ENCODE measurements at regions of chr5 and their contacts with region 1.

Region 1: DNA sequence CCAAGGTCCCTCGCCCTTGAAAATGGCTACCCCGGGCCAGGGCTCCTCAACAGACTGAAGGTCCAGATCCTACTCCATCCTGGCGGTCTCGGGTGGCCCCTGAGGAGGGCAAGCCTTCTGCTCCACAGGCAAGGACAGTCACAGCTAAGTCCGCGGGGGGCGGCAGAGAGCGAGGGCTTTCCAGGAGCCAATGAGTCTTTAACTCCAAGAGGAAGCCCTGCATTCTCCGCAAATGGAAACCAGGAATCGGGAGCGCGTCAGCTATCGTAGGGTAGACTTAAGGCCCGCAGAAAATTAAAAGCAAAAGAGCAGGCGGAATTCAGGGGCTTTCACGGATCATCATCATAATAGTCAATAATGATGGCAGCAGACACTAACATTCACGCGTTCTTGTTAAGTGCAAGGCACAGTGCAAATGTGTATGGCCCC is 87.8 kb upstream of the TNFAIP8 start:
- DNase-seq: peak; percentile 92 to 93
- ATAC-seq: peak; percentile 95
- H3K4me3 ChIP-seq: peak overlapping the region; percentile 83
- H3K27ac ChIP-seq: peak overlapping the region; percentile 80
- H3K4me1 ChIP-seq: peaks cover 3% of the 10 kb centered on the region
- H3K27me3 ChIP-seq: no peaks in the 10 kb centered on the region
- CTCF ChIP-seq: peak; percentile 33

Region 2: DNA sequence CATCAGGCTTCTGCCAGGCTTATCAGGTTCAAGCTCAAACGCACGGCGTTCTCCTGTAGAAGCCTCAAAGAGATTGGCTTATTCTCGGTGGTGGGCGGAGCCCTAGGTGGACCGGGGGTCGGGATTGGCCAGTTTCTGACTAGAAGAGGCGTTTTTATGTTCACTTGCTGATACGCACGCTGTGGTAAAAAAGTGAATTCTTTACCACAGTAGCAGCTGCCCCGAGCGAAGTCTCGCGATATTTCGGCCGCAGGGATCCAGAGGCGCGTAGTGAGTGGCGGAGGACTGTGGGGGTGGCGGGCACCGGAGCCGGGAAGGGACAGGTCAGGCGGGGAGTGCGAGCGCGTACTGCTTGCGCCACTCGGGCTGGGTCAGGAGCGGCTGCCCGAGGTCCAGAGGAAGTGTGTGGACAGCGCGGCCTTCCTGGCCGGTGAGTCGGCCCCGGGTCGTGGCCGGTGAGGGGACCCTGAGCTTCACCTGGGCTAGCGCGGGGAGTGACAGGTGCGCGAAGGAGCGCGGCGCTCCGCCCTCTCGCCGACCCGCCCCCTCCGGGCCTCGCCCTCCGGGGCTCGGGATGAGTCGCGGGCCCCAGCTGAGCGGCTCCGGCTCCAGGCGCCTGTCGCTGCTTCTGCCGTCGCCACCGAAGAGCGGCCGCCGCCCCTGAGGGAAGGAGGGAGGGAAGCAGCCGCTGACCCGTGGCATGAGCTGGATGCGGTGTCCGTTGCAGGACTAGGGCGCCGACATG is 197.0 kb before region 1 on chr5 and contains the start of gene DMXL1:
- intact Hi-C with region 1: loop called in 1 of 2 experiments (anchors 5 kb)
- DNase-seq: peak; percentile 99 to 100
- ATAC-seq: peak; percentile 94 to 96 (median 96)
- H3K4me3 ChIP-seq: peak within 1 kb of the TSS; percentile 87
- H3K27ac ChIP-seq: peak within 1 kb of the TSS; percentile 98
- H3K4me1 ChIP-seq: peaks cover 30% of the 10 kb centered on the region
- H3K27me3 ChIP-seq: no peaks in the 10 kb centered on the region
- CTCF ChIP-seq: no peak
- total RNA-seq, gene DMXL1: 15.7 to 21.7 (median 18.3) TPM

Region 3: DNA sequence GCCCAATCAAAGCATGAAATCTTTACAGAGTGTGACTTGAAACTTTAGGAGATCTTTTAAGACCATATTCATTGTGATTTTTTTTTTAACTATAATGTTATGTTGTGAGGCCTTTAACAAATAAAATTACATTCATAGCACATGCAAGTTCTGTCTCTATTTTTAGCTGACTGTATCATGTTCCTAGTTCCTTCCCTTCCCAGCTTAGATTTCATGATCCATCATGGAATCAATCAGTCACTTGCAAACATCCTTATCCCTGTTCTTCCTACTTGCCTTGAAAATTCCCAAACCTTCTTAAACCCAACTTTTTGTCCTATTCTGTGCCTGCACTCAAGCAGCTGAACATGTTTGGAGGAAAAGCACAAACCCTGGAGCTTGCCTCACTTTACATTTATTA is 55.3 kb before region 1 on chr5:
- intact Hi-C with region 1: no loop called
- DNase-seq: no peak
- ATAC-seq: peak in 3 of 4 donors; percentile 30 to 71 (median 40)
- H3K4me3 ChIP-seq: no peak overlapping the region
- H3K27ac ChIP-seq: no peak overlapping the region
- H3K4me1 ChIP-seq: peaks cover 9% of the 10 kb centered on the region
- H3K27me3 ChIP-seq: no peaks in the 10 kb centered on the region
- CTCF ChIP-seq: no peak

Region 4: GRCh38 chr5:119238265-119239118 is 29.5 kb before region 1 on chr5:
- intact Hi-C with region 1: no loop called
- DNase-seq: no peak
- ATAC-seq: no peak
- H3K4me3 ChIP-seq: no peak overlapping the region
- H3K27ac ChIP-seq: no peak overlapping the region
- H3K4me1 ChIP-seq: no peaks in the 10 kb centered on the region
- H3K27me3 ChIP-seq: no peaks in the 10 kb centered on the region
- CTCF ChIP-seq: no peak

Region 5: GRCh38 chr5:119458911-119459632 is 191.1 kb after region 1 on chr5:
- intact Hi-C with region 1: no loop called
- DNase-seq: no peak
- ATAC-seq: no peak
- H3K4me3 ChIP-seq: no peak overlapping the region
- H3K27ac ChIP-seq: no peak overlapping the region
- H3K4me1 ChIP-seq: peaks cover 5% of the 10 kb centered on the region
- H3K27me3 ChIP-seq: no peaks in the 10 kb centered on the region
- CTCF ChIP-seq: no peak